PC-9 (cell line): ENCODE measurements at regions of chr3 and their contacts with region 1.

Region 1: GRCh38 chr3:175861916-175862315 is 1002.8 kb downstream of the NAALADL2 start:
- DNase-seq: no peak
- H3K4me3 ChIP-seq: no peak overlapping the region
- H3K27ac ChIP-seq: no peak overlapping the region
- H3K4me1 ChIP-seq: no peaks in the 10 kb centered on the region
- H3K27me3 ChIP-seq: no peaks in the 10 kb centered on the region
- CTCF ChIP-seq: no peak

Region 2: GRCh38 chr3:175941356-175941755 is 79.4 kb after region 1 on chr3:
- CTCF ChIA-PET with region 1: no interaction called
- POLR2A ChIA-PET with region 1: interaction called, 10 read pairs
- intact Hi-C with region 1: no loop called
- DNase-seq: peak in 1 of 2 experiments; percentile 30
- H3K4me3 ChIP-seq: no peak overlapping the region
- H3K27ac ChIP-seq: no peak overlapping the region
- H3K4me1 ChIP-seq: no peaks in the 10 kb centered on the region
- H3K27me3 ChIP-seq: no peaks in the 10 kb centered on the region
- CTCF ChIP-seq: peak; percentile 71

Region 3: DNA sequence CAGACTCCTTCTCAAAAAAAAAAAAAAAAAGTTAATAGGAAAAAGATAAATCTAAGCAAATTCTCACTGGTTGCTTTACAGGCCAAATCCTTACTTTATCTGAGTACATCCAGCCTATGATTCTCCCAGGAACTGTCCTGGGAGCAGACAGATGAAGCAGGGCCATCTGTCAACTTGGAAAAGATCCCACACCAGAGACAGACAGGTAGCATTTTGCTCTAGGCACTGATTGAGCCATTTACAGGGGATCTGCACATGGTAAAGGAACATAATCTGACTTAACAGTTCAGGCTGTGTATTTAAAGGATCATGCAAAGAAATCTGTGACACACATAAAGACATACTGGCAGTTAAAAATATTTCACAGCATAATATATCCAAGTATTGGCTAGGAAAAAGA is 328.8 kb after region 1 on chr3:
- CTCF ChIA-PET with region 1: interaction called, 14 read pairs
- POLR2A ChIA-PET with region 1: no interaction called
- intact Hi-C with region 1: no loop called
- DNase-seq: no peak
- H3K4me3 ChIP-seq: no peak overlapping the region
- H3K27ac ChIP-seq: no peak overlapping the region
- H3K4me1 ChIP-seq: no peaks in the 10 kb centered on the region
- H3K27me3 ChIP-seq: no peaks in the 10 kb centered on the region
- CTCF ChIP-seq: no peak